Ovary (tissue), 10 donors: ENCODE measurements at regions of chr14 and their contacts with region 1.

Region 1: GRCh38 chr14:21455911-21456667 is at the start of gene CHD8:
- DNase-seq: peak; percentile 98 to 99 (median 99)
- H3K4me3 ChIP-seq: peak within 1 kb of the TSS; percentile 91
- H3K27ac ChIP-seq: peak within 1 kb of the TSS; percentile 65 to 93
- H3K4me1 ChIP-seq: peaks cover 4% of the 10 kb centered on the region
- H3K27me3 ChIP-seq: no peaks in the 10 kb centered on the region
- CTCF ChIP-seq: peak; percentile 37 to 71 (median 56)
- EP300 ChIP-seq: no peak
- POLR2A ChIP-seq: peak; percentile 47
- total RNA-seq, gene CHD8: 36.0 to 79.3 (median 66.9) TPM

Region 2: GRCh38 chr14:21257394-21257909 is 198.6 kb before region 1 on chr14:
- intact Hi-C with region 1: no loop called
- DNase-seq: no peak
- H3K4me3 ChIP-seq: no peak overlapping the region
- H3K27ac ChIP-seq: no peak overlapping the region
- H3K4me1 ChIP-seq: peaks cover 12% of the 10 kb centered on the region
- H3K27me3 ChIP-seq: no peaks in the 10 kb centered on the region
- CTCF ChIP-seq: no peak
- EP300 ChIP-seq: no peak
- POLR2A ChIP-seq: no peak

Region 3: DNA sequence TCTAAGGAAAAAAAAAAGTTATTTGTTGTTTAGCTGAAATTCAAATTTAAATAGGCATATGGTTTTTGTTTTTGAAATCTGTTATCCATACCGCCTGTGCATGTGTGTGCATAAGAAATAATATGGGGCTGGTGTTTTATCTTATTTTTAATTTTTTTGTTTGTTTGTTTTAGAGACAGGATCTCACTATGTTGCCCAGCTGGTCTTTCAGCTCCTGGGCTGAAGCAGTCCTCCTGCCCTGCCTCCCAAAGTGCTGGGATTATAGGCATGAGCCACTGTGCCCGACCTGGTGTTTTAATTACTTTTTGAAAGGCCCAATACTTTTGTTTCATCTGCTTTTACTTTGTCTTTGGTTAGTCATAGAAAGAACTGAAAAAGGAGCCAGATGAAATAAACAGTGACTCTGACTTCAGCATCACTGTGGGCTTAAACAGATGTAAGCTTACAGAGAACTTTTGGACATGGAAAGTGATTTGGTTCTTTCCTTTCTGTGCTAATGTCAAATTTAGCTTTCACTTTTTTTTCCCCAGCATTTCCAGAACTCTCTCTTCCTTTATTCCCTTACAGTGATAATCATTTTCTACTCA is 109.4 kb before region 1 on chr14:
- intact Hi-C with region 1: no loop called
- DNase-seq: no peak
- H3K4me3 ChIP-seq: no peak overlapping the region
- H3K27ac ChIP-seq: no peak overlapping the region
- H3K4me1 ChIP-seq: no peaks in the 10 kb centered on the region
- H3K27me3 ChIP-seq: no peaks in the 10 kb centered on the region
- CTCF ChIP-seq: no peak
- EP300 ChIP-seq: no peak
- POLR2A ChIP-seq: no peak

Region 4: GRCh38 chr14:21437063-21437901 is 18.8 kb before region 1 on chr14:
- intact Hi-C with region 1: no loop called
- DNase-seq: peak; percentile 99 to 100 (median 99)
- H3K4me3 ChIP-seq: peak overlapping the region; percentile 91
- H3K27ac ChIP-seq: peak overlapping the region; percentile 66 to 86
- H3K4me1 ChIP-seq: peaks cover 9% of the 10 kb centered on the region
- H3K27me3 ChIP-seq: no peaks in the 10 kb centered on the region
- CTCF ChIP-seq: no peak
- EP300 ChIP-seq: no peak
- POLR2A ChIP-seq: peak; percentile 44

Region 5: GRCh38 chr14:21476925-21477681 is 21.0 kb after region 1 on chr14 and contains the starts of genes RAB2B and TOX4:
- intact Hi-C with region 1: loop called in 1 of 4 experiments (anchors 2 kb)
- DNase-seq: peak; percentile 92 to 96 (median 94)
- H3K4me3 ChIP-seq: peak within 1 kb of the TSS; percentile 79
- H3K27ac ChIP-seq: peak within 1 kb of the TSS; percentile 58 to 66
- H3K4me1 ChIP-seq: peaks cover 5% of the 10 kb centered on the region
- H3K27me3 ChIP-seq: no peaks in the 10 kb centered on the region
- CTCF ChIP-seq: peak; percentile 96 to 99 (median 98)
- EP300 ChIP-seq: peak; percentile 35
- POLR2A ChIP-seq: peak; percentile 80
- total RNA-seq, gene RAB2B: 18.4 to 28.7 (median 25.0) TPM
- total RNA-seq, gene TOX4: 22.7 to 75.3 (median 64.4) TPM

Region 6: DNA sequence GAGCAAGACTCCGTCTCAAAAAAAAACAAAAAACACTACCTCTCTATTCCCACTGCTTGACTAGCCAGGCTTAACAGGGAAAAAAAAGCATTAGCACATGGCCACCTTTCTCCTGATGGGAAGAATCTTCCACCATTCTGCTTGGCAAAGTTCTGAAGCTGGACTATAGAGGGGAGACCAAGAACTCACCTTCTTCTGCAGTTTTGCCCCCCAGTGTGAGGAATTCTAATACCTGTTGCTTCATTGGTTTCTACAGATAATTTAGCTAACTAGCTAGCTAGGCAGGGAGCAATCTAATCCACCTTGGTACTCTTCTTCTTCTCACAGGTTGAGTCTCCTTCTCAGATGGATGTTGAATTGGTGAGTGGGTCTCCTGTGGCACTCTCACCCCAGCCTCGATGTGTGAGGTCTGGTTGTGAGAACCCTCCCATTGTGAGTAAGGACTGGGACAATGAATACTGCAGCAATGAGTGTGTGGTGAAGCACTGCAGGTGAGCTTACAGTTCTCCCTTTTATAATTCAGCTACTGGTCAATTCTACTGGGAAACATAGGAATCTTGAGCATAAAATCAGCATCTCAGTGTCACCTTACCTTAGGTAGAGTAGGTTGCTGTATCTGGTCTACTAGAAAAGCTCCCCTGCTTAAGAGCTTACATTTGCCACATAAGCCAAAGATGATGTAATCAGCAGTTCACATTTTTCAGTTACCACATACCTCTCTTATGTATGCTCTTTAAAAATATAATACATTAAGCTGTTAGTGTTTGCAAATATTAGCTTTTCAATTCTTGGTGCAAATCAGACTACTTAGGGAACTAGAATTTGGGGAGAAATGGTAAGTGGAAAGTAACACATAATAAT is 39.0 kb after region 1 on chr14:
- intact Hi-C with region 1: no loop called
- DNase-seq: no peak
- H3K4me3 ChIP-seq: no peak overlapping the region
- H3K27ac ChIP-seq: no peak overlapping the region
- H3K4me1 ChIP-seq: no peaks in the 10 kb centered on the region
- H3K27me3 ChIP-seq: no peaks in the 10 kb centered on the region
- CTCF ChIP-seq: no peak
- EP300 ChIP-seq: no peak
- POLR2A ChIP-seq: no peak

Region 7: GRCh38 chr14:21557084-21557901 is 101.2 kb after region 1 on chr14:
- intact Hi-C with region 1: loop called in 1 of 4 experiments (anchors 10 kb)
- DNase-seq: peak; percentile 62 to 87 (median 71)
- H3K4me3 ChIP-seq: peak overlapping the region; percentile 12
- H3K27ac ChIP-seq: peak overlapping the region in 1 of 2 donors; percentile 56
- H3K4me1 ChIP-seq: no peaks in the 10 kb centered on the region
- H3K27me3 ChIP-seq: no peaks in the 10 kb centered on the region
- CTCF ChIP-seq: peak; percentile 70 to 86 (median 82)
- EP300 ChIP-seq: no peak
- POLR2A ChIP-seq: no peak